HepG2 (cell line): ENCODE measurements at regions of chr5 and their contacts with region 1.

Region 1: DNA sequence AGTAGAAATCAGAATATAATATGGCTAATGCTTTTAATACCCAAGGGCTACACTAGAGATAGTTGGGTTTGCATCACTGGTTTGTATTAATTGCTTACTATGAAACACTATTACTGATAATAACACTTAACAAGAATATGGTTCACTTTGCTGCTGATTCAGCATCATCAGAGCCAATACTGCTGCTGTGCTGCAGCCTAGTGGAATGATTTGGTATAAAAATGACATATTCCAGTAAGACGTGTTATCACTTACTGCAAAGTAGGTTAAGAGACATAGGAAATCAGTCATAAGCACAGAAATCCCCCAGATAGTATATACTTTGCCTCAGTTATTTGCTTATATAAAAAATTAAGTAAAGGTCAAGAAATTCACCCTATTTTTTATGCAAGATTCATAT is 2.8 kb downstream of the CDH10 start:
- DNase-seq: peak; percentile 16
- ATAC-seq: peak; percentile 82
- H3K4me3 ChIP-seq: no peak overlapping the region
- H3K27ac ChIP-seq: no peak overlapping the region
- H3K4me1 ChIP-seq: no peaks in the 10 kb centered on the region
- H3K27me3 ChIP-seq: no peaks in the 10 kb centered on the region
- CTCF ChIP-seq: peak; percentile 55
- EP300 ChIP-seq: no peak
- POLR2A ChIP-seq: no peak
- RAD21 ChIP-seq: no peak

Region 2: DNA sequence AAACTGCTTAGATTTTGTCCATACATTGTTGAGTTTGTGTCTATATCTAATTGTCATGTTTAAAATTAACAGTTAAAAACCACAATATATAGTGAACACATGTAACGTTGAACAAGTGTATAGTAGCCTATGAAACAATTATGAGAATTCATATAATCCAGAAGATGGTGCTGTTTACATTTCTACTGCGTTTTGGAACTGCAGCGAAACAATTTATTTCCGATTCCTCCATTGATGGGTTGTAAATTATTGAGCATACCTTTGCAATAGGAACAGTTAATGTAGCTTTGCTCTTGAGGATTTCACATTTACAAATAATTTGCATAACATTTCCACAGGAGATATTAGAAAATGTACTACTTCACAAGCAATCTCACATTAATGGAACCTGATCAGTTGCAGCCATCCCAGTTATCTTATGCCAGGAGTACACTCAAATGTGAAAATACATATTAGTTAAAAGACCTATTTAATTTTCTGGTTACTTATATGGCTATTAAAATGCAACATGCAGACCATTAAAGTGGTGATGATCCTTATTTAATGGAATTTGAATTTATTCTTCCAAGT is 409.0 kb before region 1 on chr5:
- CTCF ChIA-PET with region 1: no interaction called
- POLR2A ChIA-PET with region 1: no interaction called
- in situ Hi-C with region 1: no loop called
- intact Hi-C with region 1: loop called (anchors 5 kb)
- DNase-seq: no peak
- ATAC-seq: no peak
- H3K4me3 ChIP-seq: no peak overlapping the region
- H3K27ac ChIP-seq: no peak overlapping the region
- H3K4me1 ChIP-seq: peaks cover 6% of the 10 kb centered on the region; the same call in 1 of the 2 replicates
- H3K27me3 ChIP-seq: no peaks in the 10 kb centered on the region
- CTCF ChIP-seq: no peak; the same call in 1 of the 2 replicates
- EP300 ChIP-seq: no peak
- POLR2A ChIP-seq: no peak
- RAD21 ChIP-seq: no peak

Region 3: DNA sequence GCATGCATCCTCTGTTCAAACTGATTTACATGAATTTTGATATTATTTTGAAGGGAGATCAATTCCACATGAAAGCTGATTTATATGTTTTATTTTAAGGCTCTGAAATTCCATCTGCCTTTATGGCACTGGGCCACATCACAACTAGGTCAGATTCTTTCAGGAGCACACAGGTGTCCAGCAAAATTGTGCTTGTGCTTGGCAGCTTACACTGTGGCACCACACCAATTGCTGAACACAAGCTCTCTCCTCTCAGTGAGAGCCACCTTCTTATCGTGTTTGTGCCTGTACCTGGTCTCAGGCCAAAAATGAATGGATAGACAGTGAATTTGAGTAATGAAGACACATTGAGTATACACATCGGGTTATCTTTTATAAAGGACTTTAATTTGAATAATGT is 197.6 kb before region 1 on chr5:
- CTCF ChIA-PET with region 1: interaction called, 3 read pairs
- POLR2A ChIA-PET with region 1: no interaction called
- in situ Hi-C with region 1: no loop called
- intact Hi-C with region 1: loop called (anchors 1 kb)
- DNase-seq: no peak
- ATAC-seq: no peak
- H3K4me3 ChIP-seq: no peak overlapping the region
- H3K27ac ChIP-seq: no peak overlapping the region
- H3K4me1 ChIP-seq: no peaks in the 10 kb centered on the region
- H3K27me3 ChIP-seq: no peaks in the 10 kb centered on the region
- CTCF ChIP-seq: no peak
- EP300 ChIP-seq: no peak
- POLR2A ChIP-seq: no peak
- RAD21 ChIP-seq: no peak

Region 4: GRCh38 chr5:24505258-24505657 is 136.8 kb before region 1 on chr5:
- CTCF ChIA-PET with region 1: no interaction called
- POLR2A ChIA-PET with region 1: no interaction called
- in situ Hi-C with region 1: no loop called
- intact Hi-C with region 1: no loop called
- DNase-seq: no peak
- ATAC-seq: no peak
- H3K4me3 ChIP-seq: no peak overlapping the region
- H3K27ac ChIP-seq: no peak overlapping the region
- H3K4me1 ChIP-seq: peaks cover 11% of the 10 kb centered on the region
- H3K27me3 ChIP-seq: no peaks in the 10 kb centered on the region
- CTCF ChIP-seq: no peak
- EP300 ChIP-seq: no peak
- POLR2A ChIP-seq: no peak
- RAD21 ChIP-seq: no peak

Region 5: DNA sequence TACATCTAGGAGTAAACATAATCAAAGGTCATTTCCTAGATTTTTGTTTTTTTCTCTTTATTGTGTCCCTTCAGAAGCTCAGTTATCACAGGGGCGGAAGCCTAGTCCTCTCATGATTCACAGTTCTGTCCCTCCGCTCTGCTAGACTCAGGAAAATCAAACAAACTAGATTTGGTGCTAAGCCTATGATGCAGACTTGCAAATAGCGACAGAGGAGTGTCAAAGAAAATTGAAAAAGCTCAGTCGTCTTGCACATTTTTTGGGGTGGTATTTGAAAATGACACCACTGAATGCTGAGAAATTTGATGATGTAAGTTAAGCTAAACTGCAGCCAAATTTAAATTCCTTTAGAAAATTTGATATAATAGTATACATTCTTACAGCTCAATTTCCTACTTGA is 56.3 kb before region 1 on chr5:
- CTCF ChIA-PET with region 1: no interaction called
- POLR2A ChIA-PET with region 1: no interaction called
- in situ Hi-C with region 1: no loop called
- intact Hi-C with region 1: no loop called
- DNase-seq: no peak
- ATAC-seq: no peak
- H3K4me3 ChIP-seq: no peak overlapping the region
- H3K27ac ChIP-seq: no peak overlapping the region
- H3K4me1 ChIP-seq: no peaks in the 10 kb centered on the region
- H3K27me3 ChIP-seq: no peaks in the 10 kb centered on the region
- CTCF ChIP-seq: no peak
- EP300 ChIP-seq: no peak
- POLR2A ChIP-seq: no peak
- RAD21 ChIP-seq: no peak